Posterior cingulate gyrus (tissue), 11 donors: ENCODE measurements at regions of chrX and their contacts with region 1.

Region 1: GRCh38 chrX:136920001-136920400 is 39.5 kb upstream of the RBMX start:
- DNase-seq: peak in 1 of 10 donors; percentile 30

Region 2: GRCh38 chrX:136711147-136711546 is 208.9 kb before region 1 on chrX:
- intact Hi-C with region 1: loop called (anchors 1 kb)
- DNase-seq: peak in 6 of 10 donors; percentile 6 to 86 (median 28)